Naive thymus-derived CD8-positive, alpha-beta T cell (primary cell): ENCODE measurements at regions of chr1 and their contacts with region 1.

Region 1: GRCh38 chr1:235504496-235505222 is 407 bp upstream of the B3GALNT2 start:
- DNase-seq: peak; percentile 96 to 99 (median 98)
- ATAC-seq: peak; percentile 78 to 82
- H3K4me3 Mint-ChIP-seq: peak overlapping the region; percentile 93 to 99 (median 96)
- H3K27ac Mint-ChIP-seq: peak overlapping the region; percentile 93 to 98 (median 98)
- H3K4me1 Mint-ChIP-seq: peaks cover 14 to 28% (median 20%) of the 10 kb centered on the region in 4 donors
- H3K27me3 Mint-ChIP-seq: peaks cover 0 to 2% (median 0%) of the 10 kb centered on the region in 5 donors

Region 2: GRCh38 chr1:235866913-235867845 is 362.5 kb after region 1 on chr1:
- POLR2A ChIA-PET with region 1: interaction called, 12 read pairs
- DNase-seq: peak; percentile 97 to 100 (median 98)
- ATAC-seq: peak; percentile 65 to 74
- H3K4me3 Mint-ChIP-seq: peak overlapping the region; percentile 89 to 99 (median 96)
- H3K27ac Mint-ChIP-seq: peak overlapping the region; percentile 94 to 100 (median 99)
- H3K4me1 Mint-ChIP-seq: peaks cover 21 to 65% (median 55%) of the 10 kb centered on the region in 4 donors
- H3K27me3 Mint-ChIP-seq: no peaks in the 10 kb centered on the region